ENCODE measurements at regions of chr5 and their contacts with region 1.

Region 1: DNA sequence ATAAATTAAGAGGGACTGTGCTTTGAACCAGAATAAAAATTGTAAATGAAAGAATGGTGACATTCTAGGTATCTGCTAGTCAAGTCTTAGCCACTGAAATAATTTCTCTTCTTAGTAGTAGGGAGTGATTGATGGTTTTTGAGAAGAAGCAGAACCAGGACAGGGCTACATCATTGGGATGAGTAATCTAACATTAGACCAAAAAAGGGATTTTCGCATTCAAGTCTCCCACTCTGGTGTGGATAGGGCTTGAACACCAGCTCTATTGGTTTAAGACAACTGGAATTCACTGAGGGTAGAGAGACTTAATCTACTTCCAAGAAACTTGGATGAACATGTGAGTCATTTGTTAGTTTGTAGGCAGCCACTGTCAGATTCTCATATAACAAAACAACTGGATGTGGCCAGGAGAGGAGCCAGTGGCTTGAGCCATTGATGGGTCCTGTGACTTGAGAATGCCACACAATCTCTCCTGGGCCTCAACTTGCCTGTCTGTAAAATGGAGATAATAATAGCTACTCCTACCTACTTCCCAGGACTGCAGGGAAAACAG is 16.6 kb downstream of the FAT2 start:
- DNase-seq: peak; percentile 49
- ATAC-seq: peak; percentile 68
- H3K4me3 ChIP-seq: no peak overlapping the region
- H3K27ac ChIP-seq: no peak overlapping the region
- H3K4me1 ChIP-seq: peaks cover 21% of the 10 kb centered on the region
- H3K27me3 ChIP-seq: no peaks in the 10 kb centered on the region
- CTCF ChIP-seq: no peak

Region 2: DNA sequence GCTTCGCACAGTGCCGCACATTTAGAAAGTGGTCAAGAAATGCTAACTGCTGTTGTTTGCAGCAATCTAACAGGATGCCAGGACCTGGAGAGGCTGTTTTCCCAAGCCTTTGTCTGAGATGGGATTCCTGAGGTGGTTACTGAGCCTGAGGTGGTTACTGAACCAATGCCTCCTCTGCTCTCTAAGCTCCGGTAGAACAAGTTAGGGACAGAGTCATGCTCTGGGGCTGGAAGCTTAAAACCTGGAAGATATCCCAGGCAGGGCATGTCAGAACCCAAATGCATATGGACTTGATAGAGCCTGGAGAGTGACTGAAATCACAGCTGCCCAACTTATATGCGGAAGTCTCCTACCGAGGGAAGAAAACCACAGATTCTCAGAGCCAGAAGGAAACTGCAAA is 63.2 kb after region 1 on chr5:
- CTCF ChIA-PET with region 1: no interaction called
- POLR2A ChIA-PET with region 1: interaction called, 13 read pairs
- intact Hi-C with region 1: no loop called
- DNase-seq: no peak
- ATAC-seq: no peak
- H3K4me3 ChIP-seq: no peak overlapping the region
- H3K27ac ChIP-seq: no peak overlapping the region
- H3K4me1 ChIP-seq: no peaks in the 10 kb centered on the region
- H3K27me3 ChIP-seq: peaks cover 35% of the 10 kb centered on the region
- CTCF ChIP-seq: no peak

Region 3: GRCh38 chr5:151771259-151772028 is 196.9 kb after region 1 on chr5 and contains the start of gene G3BP1:
- CTCF ChIA-PET with region 1: no interaction called
- POLR2A ChIA-PET with region 1: no interaction called
- intact Hi-C with region 1: no loop called
- DNase-seq: peak; percentile 100
- ATAC-seq: peak; percentile 86
- H3K4me3 ChIP-seq: peak within 1 kb of the TSS; percentile 85
- H3K27ac ChIP-seq: peak within 1 kb of the TSS; percentile 91
- H3K4me1 ChIP-seq: peaks cover 28% of the 10 kb centered on the region
- H3K27me3 ChIP-seq: no peaks in the 10 kb centered on the region
- CTCF ChIP-seq: peak; percentile 69
- total RNA-seq, gene G3BP1: 133 and 157 TPM in 2 replicates

Measured in PC-3 (cell line).